IMR-90 (cell line): ENCODE measurements at regions of chr15 and their contacts with region 1.

Region 1: GRCh38 chr15:44971036-44971435 is 14.5 kb downstream of the TERB2 start:
- DNase-seq: no peak
- ATAC-seq: no peak
- H3K4me3 ChIP-seq: no peak overlapping the region
- H3K27ac ChIP-seq: no peak overlapping the region
- H3K4me1 ChIP-seq: no peaks in the 10 kb centered on the region
- H3K27me3 ChIP-seq: no peaks in the 10 kb centered on the region; the same call in 1 of the 2 replicates
- CTCF ChIP-seq: no peak
- POLR2A ChIP-seq: no peak
- RAD21 ChIP-seq: no peak

Region 2: GRCh38 chr15:44861439-44861910 is 109.6 kb before region 1 on chr15:
- CTCF ChIA-PET with region 1: no interaction called
- POLR2A ChIA-PET with region 1: no interaction called
- dilution Hi-C with region 1: no loop called
- in situ Hi-C with region 1: no loop called
- intact Hi-C with region 1: no loop called
- DNase-seq: no peak
- ATAC-seq: no peak
- H3K4me3 ChIP-seq: no peak overlapping the region
- H3K27ac ChIP-seq: no peak overlapping the region
- H3K4me1 ChIP-seq: no peaks in the 10 kb centered on the region
- H3K27me3 ChIP-seq: no peaks in the 10 kb centered on the region
- CTCF ChIP-seq: no peak
- POLR2A ChIP-seq: no peak
- RAD21 ChIP-seq: no peak

Region 3: GRCh38 chr15:44910981-44911625 is 59.9 kb before region 1 on chr15:
- CTCF ChIA-PET with region 1: no interaction called
- POLR2A ChIA-PET with region 1: interaction called, 10 read pairs
- dilution Hi-C with region 1: no loop called
- in situ Hi-C with region 1: no loop called
- intact Hi-C with region 1: no loop called
- DNase-seq: no peak
- ATAC-seq: no peak
- H3K4me3 ChIP-seq: no peak overlapping the region
- H3K27ac ChIP-seq: no peak overlapping the region
- H3K4me1 ChIP-seq: no peaks in the 10 kb centered on the region
- H3K27me3 ChIP-seq: no peaks in the 10 kb centered on the region
- CTCF ChIP-seq: no peak
- POLR2A ChIP-seq: no peak
- RAD21 ChIP-seq: no peak

Region 4: GRCh38 chr15:45037936-45038335 is 66.9 kb after region 1 on chr15:
- CTCF ChIA-PET with region 1: no interaction called
- POLR2A ChIA-PET with region 1: no interaction called
- dilution Hi-C with region 1: no loop called
- in situ Hi-C with region 1: no loop called
- intact Hi-C with region 1: loop called (anchors 1 kb)
- DNase-seq: no peak
- ATAC-seq: no peak
- H3K4me3 ChIP-seq: no peak overlapping the region
- H3K27ac ChIP-seq: no peak overlapping the region
- H3K4me1 ChIP-seq: no peaks in the 10 kb centered on the region
- H3K27me3 ChIP-seq: no peaks in the 10 kb centered on the region
- CTCF ChIP-seq: no peak
- POLR2A ChIP-seq: no peak
- RAD21 ChIP-seq: no peak